ENCODE measurements at regions of chr7 and their contacts with region 1.

Region 1: GRCh38 chr7:38398725-38399321 is 125.4 kb upstream of the TARP start:
- DNase-seq: peak; percentile 72
- ATAC-seq: no peak
- H3K4me3 Mint-ChIP-seq: no peak overlapping the region
- H3K27ac Mint-ChIP-seq: no peak overlapping the region
- H3K4me1 Mint-ChIP-seq: peaks cover 2% of the 10 kb centered on the region
- H3K27me3 Mint-ChIP-seq: peaks cover 10% of the 10 kb centered on the region

Region 2: DNA sequence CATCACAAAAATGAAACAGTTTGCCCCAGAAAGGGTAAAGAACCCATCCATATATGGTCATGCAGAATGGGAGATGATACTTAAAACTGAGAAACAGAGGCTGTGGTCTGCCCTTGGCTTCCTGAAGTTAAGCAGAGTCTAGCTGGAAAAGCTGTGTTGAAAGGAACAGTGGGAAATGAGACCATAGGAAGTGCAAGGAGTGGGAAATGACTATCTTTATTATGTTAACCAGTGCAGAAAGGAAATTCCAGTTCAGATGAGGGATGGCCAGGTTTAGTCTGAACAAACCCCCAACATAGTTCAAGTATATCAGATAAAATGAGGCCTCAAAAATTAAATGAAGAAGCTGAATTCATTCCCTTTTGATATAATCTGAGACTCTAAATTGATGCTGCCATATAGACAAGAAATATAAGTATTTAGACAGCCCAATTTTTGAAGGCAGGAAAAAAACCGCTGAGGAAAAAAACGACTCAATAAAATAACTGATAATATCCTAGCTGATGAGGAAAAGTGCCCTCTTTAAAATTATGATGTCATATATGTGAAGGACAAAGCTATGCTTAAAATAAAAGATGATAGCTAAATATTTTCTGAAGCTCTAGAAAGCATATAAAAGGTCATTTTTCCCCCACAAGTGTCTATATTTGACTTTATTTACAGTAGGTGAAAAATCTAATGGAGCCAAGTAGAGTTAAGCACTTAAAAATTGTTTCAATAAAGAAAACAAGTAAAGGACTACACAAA is 13.0 kb before region 1 on chr7:
- CTCF ChIA-PET with region 1: interaction called, 13 read pairs
- POLR2A ChIA-PET with region 1: no interaction called
- intact Hi-C with region 1: no loop called
- DNase-seq: no peak
- ATAC-seq: no peak
- H3K4me3 Mint-ChIP-seq: no peak overlapping the region
- H3K27ac Mint-ChIP-seq: no peak overlapping the region
- H3K4me1 Mint-ChIP-seq: no peaks in the 10 kb centered on the region
- H3K27me3 Mint-ChIP-seq: no peaks in the 10 kb centered on the region

Region 3: GRCh38 chr7:38561166-38561565 is 162.3 kb after region 1 on chr7:
- CTCF ChIA-PET with region 1: no interaction called
- POLR2A ChIA-PET with region 1: no interaction called
- intact Hi-C with region 1: no loop called
- DNase-seq: no peak
- ATAC-seq: no peak
- H3K4me3 Mint-ChIP-seq: no peak overlapping the region
- H3K27ac Mint-ChIP-seq: no peak overlapping the region
- H3K4me1 Mint-ChIP-seq: no peaks in the 10 kb centered on the region
- H3K27me3 Mint-ChIP-seq: peaks cover 2% of the 10 kb centered on the region

Region 4: DNA sequence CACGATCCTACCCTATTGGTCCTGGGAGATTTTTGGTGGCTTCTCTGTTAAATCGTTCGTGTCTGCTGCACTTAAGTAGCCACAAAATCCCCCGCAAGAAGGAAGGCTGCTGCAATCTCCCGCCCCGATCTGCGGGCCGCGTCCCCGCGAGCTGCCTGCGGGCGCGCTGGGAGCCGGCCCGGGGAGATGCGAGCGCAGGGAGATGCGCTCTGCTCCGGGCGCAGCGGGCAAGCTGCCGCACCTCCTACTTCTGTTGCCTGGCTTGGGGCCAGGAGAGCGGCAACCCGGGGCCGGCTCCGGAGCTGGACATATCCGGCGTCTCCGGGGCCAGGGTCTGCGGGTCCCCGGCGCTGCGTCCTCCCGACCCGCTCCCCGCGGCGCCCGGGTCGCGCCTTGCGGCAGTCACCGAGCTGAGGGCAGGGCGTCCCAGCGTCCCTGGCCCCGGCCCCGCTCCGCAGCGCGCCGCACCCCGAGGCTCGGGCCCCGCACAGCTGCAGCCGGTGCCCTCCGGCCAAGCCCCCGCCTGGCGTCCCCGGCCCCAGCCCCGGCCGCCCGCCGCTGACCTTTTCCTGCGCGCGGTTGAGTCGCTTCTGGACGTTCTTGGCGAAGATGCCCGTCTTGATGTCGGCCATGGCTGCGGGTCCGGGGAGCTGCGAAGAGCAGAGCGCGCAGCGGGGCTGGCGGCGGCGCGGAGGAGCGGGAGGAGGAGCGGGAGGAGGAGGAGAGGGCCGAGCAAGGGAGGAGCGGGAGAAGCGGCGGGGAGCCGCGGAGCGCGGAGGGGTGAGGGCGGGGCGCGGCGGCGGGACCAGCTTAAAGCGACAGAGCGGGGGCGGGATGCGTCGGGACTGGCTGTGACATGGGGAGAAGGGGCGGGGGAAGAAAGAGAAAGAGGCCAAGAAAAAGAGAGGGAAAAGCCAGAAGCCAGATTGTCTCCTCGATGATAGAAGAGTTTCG is 232.2 kb after region 1 on chr7 and contains the start of gene AMPH:
- CTCF ChIA-PET with region 1: interaction called, 11 read pairs
- POLR2A ChIA-PET with region 1: no interaction called
- intact Hi-C with region 1: no loop called
- DNase-seq: peak; percentile 57
- ATAC-seq: peak; percentile 69
- H3K4me3 Mint-ChIP-seq: peak within 1 kb of the TSS; percentile 59
- H3K27ac Mint-ChIP-seq: no peak within 1 kb of the TSS
- H3K4me1 Mint-ChIP-seq: peaks cover 9% of the 10 kb centered on the region
- H3K27me3 Mint-ChIP-seq: peaks cover 45% of the 10 kb centered on the region
- total RNA-seq, gene AMPH: 0.07 TPM in 1 of 2 experiments, not detected in the other

Region 5: DNA sequence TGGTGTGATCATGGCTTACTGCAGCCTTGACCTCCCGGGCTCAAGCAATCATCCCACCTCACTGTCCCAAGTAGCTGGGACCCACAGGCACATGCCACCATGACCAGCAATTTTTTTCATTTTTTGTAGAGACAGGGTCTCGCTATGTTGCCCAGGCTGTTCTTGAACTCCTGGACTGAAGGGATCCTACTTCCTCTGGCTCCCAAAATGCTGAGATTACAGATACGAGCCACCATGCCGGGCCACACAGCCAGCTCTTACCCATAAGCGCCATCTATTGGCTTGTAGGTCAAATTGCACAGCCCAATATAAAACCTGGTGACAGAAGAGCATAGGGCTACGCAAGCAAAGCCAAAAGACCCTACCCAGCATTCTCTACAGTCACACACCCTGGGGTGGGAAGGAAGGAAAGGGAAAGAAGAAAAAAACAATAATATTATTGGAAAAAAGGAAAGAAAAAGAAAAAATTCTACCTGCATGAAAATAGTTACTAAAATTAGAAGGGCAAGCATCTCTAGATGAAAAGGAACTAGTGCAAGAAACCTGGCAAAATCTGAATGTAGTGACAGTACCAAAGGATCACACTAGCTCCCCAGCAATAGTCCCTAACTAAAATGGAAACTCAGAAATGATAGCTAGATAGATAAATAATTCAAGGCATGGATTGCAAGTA is 261.7 kb after region 1 on chr7:
- CTCF ChIA-PET with region 1: interaction called, 28 read pairs
- POLR2A ChIA-PET with region 1: no interaction called
- intact Hi-C with region 1: loop called (anchors 1 kb)
- DNase-seq: peak; percentile 56
- ATAC-seq: peak; percentile 82
- H3K4me3 Mint-ChIP-seq: no peak overlapping the region
- H3K27ac Mint-ChIP-seq: no peak overlapping the region
- H3K4me1 Mint-ChIP-seq: no peaks in the 10 kb centered on the region
- H3K27me3 Mint-ChIP-seq: peaks cover 19% of the 10 kb centered on the region

Region 6: GRCh38 chr7:39465055-39465929 is 1066.5 kb after region 1 on chr7:
- CTCF ChIA-PET with region 1: no interaction called
- POLR2A ChIA-PET with region 1: no interaction called
- intact Hi-C with region 1: loop called in 1 of 2 experiments (anchors 5 kb)
- DNase-seq: peak; percentile 68
- ATAC-seq: peak; percentile 86
- H3K4me3 Mint-ChIP-seq: no peak overlapping the region
- H3K27ac Mint-ChIP-seq: no peak overlapping the region
- H3K4me1 Mint-ChIP-seq: peaks cover 2% of the 10 kb centered on the region
- H3K27me3 Mint-ChIP-seq: peaks cover 7% of the 10 kb centered on the region

Measured in activated CD4-positive, alpha-beta T cell treated with anti-CD3 and anti-CD28 coated beads for 36 hours (primary cell).